ENCODE measurements at regions of chr2 and their contacts with region 1.

Region 1: DNA sequence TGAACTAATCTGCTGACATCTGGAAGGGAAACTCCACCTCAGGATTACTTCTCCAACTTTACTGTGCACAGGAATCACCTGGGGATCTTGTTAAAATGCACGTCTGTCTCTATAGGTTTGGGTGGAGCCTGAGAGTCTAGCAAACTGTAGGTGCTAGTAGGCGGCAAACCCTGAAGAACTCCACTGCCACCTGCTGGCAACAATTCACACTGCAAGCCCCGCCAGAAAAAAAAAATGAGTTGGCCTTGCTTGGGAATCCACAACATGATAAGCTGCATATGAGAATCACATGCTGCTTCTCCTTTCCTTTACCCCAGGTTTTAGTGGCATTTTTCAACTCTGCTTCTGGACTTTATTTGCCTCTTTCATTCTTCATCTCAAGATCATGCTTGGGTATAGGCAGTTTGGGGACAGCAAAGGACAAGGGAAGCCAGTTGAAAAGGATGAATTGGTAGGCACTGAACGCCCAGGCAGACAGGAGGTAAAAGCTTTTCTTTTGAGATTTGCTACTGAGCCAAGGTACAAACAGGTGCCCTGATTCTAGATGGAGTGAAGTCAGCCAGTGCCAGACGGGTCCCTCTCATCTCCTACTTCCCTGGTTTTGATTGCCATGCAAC is 88.8 kb downstream of the VIT start:
- DNase-seq: peak; percentile 76
- ATAC-seq: peak; percentile 87
- H3K4me3 Mint-ChIP-seq: no peak overlapping the region
- H3K27ac Mint-ChIP-seq: no peak overlapping the region
- H3K4me1 Mint-ChIP-seq: peaks cover 3% of the 10 kb centered on the region
- H3K27me3 Mint-ChIP-seq: peaks cover 16% of the 10 kb centered on the region

Region 2: DNA sequence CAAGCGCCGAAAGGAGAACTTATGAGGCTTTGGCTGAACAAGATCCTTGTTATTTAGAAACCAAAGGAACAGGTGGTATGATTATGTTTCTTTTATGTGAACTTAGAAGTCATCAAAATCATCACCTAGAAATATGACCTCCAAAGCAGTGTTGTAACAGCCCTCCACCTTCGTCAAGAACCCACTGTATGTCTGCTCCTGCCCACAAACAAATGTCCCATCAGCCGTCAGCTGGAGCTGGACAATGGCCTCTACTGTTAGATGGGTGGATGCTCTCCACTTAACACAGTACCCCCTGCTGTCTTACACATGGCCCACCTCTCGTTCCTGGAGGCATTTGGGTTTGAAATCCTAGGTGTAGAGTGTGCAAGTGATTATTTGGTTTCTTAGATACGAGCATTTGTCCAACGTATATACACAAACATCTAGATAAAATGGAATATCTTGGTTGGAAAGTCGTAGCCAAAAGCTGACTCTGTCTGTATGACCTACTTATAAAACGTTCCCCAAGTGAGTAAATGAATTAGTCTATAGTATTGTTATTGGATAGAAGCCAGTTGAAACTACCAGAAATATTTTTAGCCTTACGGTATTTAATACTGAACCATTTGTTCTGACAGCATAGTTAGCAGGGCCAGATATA is 316.7 kb before region 1 on chr2:
- CTCF ChIA-PET with region 1: no interaction called
- POLR2A ChIA-PET with region 1: no interaction called
- intact Hi-C with region 1: no loop called
- DNase-seq: no peak
- ATAC-seq: no peak
- H3K4me3 Mint-ChIP-seq: no peak overlapping the region
- H3K27ac Mint-ChIP-seq: no peak overlapping the region
- H3K4me1 Mint-ChIP-seq: no peaks in the 10 kb centered on the region
- H3K27me3 Mint-ChIP-seq: no peaks in the 10 kb centered on the region

Region 3: DNA sequence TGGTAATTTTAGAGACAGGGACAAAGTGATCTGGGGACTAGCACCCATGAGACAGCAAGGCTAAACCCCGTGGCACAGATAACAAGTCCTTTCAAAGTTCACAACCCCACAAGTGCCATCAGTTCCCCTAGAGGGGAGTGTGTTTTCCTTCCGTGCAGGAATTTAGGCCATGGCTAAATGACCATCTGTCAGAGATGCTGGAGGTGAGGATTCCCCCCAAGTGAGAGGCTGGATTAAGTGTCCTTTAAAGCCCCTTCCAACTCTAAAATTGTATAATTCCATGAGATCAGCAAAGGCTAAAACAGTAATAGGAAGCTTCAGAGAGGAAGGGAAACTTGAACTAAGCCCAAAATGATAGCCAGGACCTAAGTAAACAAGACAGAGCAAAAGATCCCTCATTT is 196.1 kb before region 1 on chr2:
- CTCF ChIA-PET with region 1: no interaction called
- POLR2A ChIA-PET with region 1: no interaction called
- intact Hi-C with region 1: no loop called
- DNase-seq: no peak
- ATAC-seq: no peak
- H3K4me3 Mint-ChIP-seq: no peak overlapping the region
- H3K27ac Mint-ChIP-seq: no peak overlapping the region
- H3K4me1 Mint-ChIP-seq: peaks cover 9% of the 10 kb centered on the region
- H3K27me3 Mint-ChIP-seq: no peaks in the 10 kb centered on the region

Region 4: DNA sequence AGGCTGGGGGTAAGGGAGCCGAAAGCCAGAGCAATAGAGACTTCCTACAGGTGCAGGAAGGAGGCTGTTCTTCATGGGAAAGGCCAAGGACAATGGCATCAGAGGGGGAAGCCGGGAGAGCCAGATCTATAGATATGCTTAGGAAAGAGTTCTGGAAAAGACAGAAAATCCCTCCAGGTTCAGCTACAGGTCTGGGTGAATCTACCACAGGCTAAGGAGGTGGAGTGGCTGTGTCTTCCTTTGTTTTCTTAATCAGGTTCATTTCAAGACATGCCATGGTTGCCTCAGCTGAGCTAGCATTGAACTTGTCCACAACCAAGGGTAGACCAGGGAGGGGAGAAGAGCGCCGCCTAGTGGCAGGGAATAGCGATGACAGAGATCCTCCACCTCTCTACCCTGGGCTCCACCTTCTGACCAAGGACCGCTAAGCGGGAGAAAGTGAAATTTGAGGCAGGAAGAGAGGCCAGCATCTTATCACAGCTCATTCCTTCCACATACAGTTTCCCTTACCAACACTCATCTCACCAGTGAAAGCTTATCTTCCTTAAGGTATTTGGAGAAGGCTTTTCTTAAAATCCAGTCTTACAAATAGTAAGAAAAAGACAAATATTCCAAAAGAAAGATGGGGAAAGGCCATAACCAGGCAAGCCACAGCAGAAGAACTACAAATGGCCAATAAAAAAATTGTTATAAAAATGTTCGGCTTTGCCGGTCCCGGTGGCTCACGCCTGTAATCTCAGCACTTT is 14.6 kb before region 1 on chr2:
- CTCF ChIA-PET with region 1: interaction called, 19 read pairs
- POLR2A ChIA-PET with region 1: no interaction called
- intact Hi-C with region 1: no loop called
- DNase-seq: peak; percentile 77
- ATAC-seq: peak; percentile 86
- H3K4me3 Mint-ChIP-seq: no peak overlapping the region
- H3K27ac Mint-ChIP-seq: no peak overlapping the region
- H3K4me1 Mint-ChIP-seq: peaks cover 2% of the 10 kb centered on the region
- H3K27me3 Mint-ChIP-seq: peaks cover 3% of the 10 kb centered on the region

Region 5: DNA sequence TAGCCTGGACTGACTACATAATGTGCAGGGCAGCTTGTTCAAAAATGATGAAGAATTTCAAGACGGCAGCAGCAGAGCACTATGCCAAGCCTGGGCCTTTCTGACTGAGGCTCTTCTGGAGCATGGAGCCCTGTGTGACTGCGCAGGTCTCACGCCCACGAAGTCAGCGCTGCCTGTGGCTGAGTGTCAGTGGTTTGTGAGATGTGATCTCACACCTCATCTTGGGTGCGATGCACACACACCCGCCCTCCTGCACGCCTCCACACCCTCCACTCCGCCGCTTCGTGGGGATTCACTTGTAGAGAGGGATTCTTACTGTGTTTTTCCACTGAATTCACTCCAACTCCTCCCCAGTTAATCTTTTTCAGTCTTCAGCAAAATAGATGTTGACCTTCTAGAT is 15.1 kb after region 1 on chr2:
- CTCF ChIA-PET with region 1: interaction called, 138 read pairs
- POLR2A ChIA-PET with region 1: no interaction called
- intact Hi-C with region 1: no loop called
- DNase-seq: peak; percentile 82
- ATAC-seq: peak; percentile 89
- H3K4me3 Mint-ChIP-seq: no peak overlapping the region
- H3K27ac Mint-ChIP-seq: peak overlapping the region; percentile 32
- H3K4me1 Mint-ChIP-seq: peaks cover 11% of the 10 kb centered on the region
- H3K27me3 Mint-ChIP-seq: peaks cover 19% of the 10 kb centered on the region

Region 6: GRCh38 chr2:36918307-36918706 is 133.0 kb after region 1 on chr2:
- CTCF ChIA-PET with region 1: interaction called, 3 read pairs
- POLR2A ChIA-PET with region 1: no interaction called
- intact Hi-C with region 1: loop called (anchors 2 kb)
- DNase-seq: no peak
- ATAC-seq: no peak
- H3K4me3 Mint-ChIP-seq: no peak overlapping the region
- H3K27ac Mint-ChIP-seq: no peak overlapping the region
- H3K4me1 Mint-ChIP-seq: peaks cover 20% of the 10 kb centered on the region
- H3K27me3 Mint-ChIP-seq: no peaks in the 10 kb centered on the region

Region 7: DNA sequence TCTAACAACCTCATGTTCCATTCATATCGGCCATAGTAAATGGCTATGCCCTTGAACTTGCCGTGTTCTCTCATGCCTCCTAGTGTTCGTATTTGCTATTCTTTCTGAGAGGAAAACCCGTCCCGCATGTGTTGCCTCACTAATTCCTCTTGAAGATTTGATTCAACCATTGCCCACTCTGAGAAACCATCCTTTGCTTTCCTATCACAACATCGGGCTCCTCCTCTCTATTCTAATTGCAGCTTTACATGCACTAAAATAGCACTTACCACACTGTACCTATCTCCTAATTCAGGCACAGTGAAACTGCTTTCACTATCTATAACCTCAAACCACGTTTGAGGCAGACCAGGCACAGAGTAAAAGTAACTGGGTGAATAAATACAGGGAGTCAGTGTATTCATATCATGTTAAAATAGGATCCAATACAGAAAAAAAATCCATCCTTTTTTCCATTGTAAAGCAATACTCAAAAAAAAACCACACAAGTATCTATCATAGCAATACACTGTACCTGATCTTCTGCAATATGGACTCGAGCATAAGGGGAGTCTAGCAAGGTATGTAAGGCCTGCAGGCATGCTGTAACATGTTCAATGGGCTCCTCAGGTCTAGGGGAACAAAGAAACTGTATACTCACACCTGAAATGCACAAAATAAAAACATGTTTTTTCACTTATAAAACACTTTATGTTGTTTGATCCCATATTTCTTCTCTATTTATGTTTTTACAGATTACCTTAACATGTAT is 220.0 kb after region 1 on chr2:
- CTCF ChIA-PET with region 1: interaction called, 8 read pairs
- POLR2A ChIA-PET with region 1: no interaction called
- intact Hi-C with region 1: loop called (anchors 1 kb)
- DNase-seq: peak; percentile 43
- ATAC-seq: peak; percentile 95
- H3K4me3 Mint-ChIP-seq: peak overlapping the region; percentile 54
- H3K27ac Mint-ChIP-seq: peak overlapping the region; percentile 71
- H3K4me1 Mint-ChIP-seq: peaks cover 13% of the 10 kb centered on the region
- H3K27me3 Mint-ChIP-seq: no peaks in the 10 kb centered on the region

Region 8: DNA sequence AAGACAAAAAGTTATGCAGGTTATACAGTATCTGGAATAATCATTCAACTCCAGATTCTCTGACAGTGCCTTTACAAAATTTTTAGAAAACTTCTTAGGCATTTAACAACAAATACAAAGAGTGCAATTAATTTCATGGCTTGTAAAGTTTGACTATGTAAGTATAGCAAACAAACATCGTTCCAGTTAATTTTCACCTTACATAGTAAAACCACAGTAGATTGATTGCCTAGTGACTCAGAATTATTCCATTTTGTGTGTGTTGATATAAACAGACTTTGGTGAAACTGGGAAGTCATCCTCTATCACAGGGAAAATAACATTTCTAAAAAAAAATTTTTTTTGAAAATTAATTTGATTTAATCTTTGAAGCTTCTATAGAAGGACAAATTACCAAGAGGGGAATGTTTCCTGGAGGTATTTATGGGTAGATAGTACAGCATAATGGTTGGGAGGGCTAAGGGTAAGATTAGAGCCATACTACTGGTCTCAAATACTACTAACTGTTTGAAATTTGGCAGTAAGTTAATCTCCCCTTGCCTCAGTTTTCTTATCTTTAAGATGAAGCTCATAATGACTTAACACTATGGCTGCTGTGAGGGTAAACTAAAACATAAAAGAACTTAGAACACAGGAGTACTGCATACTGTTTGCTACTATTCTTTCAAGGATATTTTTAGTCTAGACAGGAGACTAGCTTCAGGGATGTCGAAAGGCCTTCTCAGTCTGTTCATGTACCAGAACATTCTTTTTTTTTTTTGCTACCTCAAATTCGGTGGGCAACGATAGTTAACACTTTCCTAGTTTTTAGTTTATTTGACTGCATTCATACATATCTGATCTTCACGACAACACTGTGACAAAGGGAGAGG is 465.8 kb after region 1 on chr2:
- CTCF ChIA-PET with region 1: no interaction called
- POLR2A ChIA-PET with region 1: no interaction called
- intact Hi-C with region 1: loop called in 1 of 2 experiments (anchors 10 kb)
- DNase-seq: no peak
- ATAC-seq: no peak
- H3K4me3 Mint-ChIP-seq: no peak overlapping the region
- H3K27ac Mint-ChIP-seq: no peak overlapping the region
- H3K4me1 Mint-ChIP-seq: peaks cover 2% of the 10 kb centered on the region
- H3K27me3 Mint-ChIP-seq: no peaks in the 10 kb centered on the region

Region 9: DNA sequence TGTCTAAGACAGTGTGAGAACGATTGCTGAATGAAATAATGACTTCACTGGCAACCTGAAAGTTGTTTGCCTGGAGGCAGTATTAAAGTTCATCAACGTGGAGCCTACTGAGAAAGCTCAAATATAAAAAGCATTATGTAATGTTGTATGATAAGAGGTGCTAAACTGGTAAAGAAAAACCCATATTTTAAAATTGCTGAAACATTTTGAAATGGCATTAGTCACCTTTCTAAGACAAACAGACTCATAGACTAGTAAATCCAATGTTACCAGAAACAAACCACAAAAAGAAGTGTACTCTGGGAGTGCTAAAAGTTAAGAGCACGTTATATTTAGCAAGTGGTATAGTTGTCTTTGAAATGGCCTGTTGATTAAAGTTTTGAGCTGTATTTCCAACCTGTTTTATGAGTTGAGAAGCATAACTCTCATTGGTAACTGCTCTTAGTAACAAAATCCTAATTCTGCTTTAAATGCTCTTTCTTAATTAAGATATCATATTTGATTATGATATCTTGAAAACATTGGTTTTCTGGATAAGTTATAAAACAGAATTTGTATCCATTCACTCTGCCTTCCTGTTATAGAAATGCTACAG is 1228.0 kb after region 1 on chr2:
- CTCF ChIA-PET with region 1: no interaction called
- POLR2A ChIA-PET with region 1: no interaction called
- intact Hi-C with region 1: no loop called
- DNase-seq: no peak
- ATAC-seq: no peak
- H3K4me3 Mint-ChIP-seq: no peak overlapping the region
- H3K27ac Mint-ChIP-seq: no peak overlapping the region
- H3K4me1 Mint-ChIP-seq: no peaks in the 10 kb centered on the region
- H3K27me3 Mint-ChIP-seq: no peaks in the 10 kb centered on the region

Measured in activated CD4-positive, alpha-beta T cell treated with anti-CD3 and anti-CD28 coated beads for 36 hours (primary cell).